Activated CD8-positive, alpha-beta T cell treated with anti-CD3 and anti-CD28 coated beads for 36 hours (primary cell): ENCODE measurements at regions of chr4 and their contacts with region 1.

Region 1: DNA sequence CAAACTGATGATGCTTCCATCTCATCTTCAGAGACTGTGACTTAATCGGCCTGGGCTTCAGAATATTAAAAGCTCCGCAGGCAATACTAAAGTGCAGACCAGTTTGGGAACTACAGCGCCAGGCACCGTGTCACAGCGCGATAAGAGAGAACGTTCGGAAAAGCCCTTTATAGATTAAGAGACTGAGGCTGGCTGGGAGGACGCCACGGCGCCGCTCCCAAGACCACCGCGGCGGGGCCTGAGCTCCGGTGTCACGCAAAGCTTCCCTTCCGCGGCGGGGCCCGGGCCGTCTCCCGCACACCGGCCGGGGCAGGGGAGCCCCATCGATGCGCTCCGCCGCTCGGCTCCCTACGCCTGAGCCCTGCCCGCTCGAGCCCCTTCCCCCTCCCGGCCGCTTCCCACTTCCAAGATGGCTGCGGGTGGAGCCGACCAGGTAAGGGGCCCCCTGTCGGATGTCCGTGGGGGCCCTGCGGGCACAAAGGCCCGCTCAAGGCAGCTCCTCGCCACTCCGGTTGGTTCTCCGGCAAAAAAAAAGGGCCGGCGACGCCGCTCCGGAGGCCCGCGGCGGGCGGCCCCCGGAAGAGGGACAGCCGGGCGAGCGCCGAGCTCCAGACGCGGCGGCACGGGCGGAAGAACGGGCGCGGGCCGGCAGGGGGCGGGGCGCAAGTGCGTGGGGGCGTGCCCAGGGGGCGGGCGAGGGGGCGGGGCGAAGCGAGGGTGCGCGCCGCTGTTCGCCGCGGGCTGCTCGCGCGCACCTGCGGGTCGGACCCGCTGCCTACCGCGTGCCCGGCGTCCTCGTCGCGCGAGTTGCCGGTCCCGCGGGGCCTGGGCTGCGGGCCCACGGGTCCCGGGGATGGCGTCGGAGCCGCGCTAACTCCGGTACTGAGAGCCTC is at the start of gene TBC1D14:
- DNase-seq: peak; percentile 88
- ATAC-seq: peak; percentile 89
- H3K4me3 Mint-ChIP-seq: peak within 1 kb of the TSS; percentile 93
- H3K27ac Mint-ChIP-seq: peak within 1 kb of the TSS; percentile 90
- H3K4me1 Mint-ChIP-seq: peaks cover 42% of the 10 kb centered on the region
- H3K27me3 Mint-ChIP-seq: no peaks in the 10 kb centered on the region
- CTCF ChIP-seq: no peak
- total RNA-seq, gene TBC1D14: 34.7 to 36.3 TPM

Region 2: DNA sequence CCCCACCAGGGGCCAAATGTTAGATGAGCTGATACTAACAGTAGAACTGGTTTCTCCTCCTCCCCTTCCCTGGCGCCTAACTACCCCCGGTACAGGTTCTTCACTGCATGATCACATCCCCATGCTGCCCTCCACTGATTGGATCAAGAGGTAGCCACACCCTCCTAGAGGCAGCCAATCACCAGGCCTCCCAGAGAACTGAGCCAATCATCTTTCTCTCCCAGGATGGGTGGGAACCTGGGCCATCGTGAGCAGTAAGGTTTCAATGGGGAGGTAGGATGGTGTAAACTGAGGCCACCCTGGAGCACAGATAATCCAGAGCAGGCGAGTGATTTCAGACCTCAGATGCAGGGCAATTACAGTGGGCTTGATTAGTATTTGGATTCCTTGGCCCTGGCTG is 501.1 kb before region 1 on chr4:
- CTCF ChIA-PET with region 1: no interaction called
- POLR2A ChIA-PET with region 1: no interaction called
- intact Hi-C with region 1: no loop called
- DNase-seq: no peak
- ATAC-seq: no peak
- H3K4me3 Mint-ChIP-seq: no peak overlapping the region
- H3K27ac Mint-ChIP-seq: no peak overlapping the region
- H3K4me1 Mint-ChIP-seq: no peaks in the 10 kb centered on the region
- H3K27me3 Mint-ChIP-seq: peaks cover 26% of the 10 kb centered on the region
- CTCF ChIP-seq: no peak

Region 3: GRCh38 chr4:6783053-6783981 is 126.0 kb before region 1 on chr4:
- CTCF ChIA-PET with region 1: no interaction called
- POLR2A ChIA-PET with region 1: interaction called, 13 read pairs
- intact Hi-C with region 1: no loop called
- DNase-seq: peak; percentile 89
- ATAC-seq: peak; percentile 75
- H3K4me3 Mint-ChIP-seq: peak overlapping the region; percentile 84
- H3K27ac Mint-ChIP-seq: peak overlapping the region; percentile 76
- H3K4me1 Mint-ChIP-seq: peaks cover 68% of the 10 kb centered on the region
- H3K27me3 Mint-ChIP-seq: no peaks in the 10 kb centered on the region
- CTCF ChIP-seq: no peak

Region 4: GRCh38 chr4:6926681-6927478 is 17.6 kb after region 1 on chr4:
- CTCF ChIA-PET with region 1: interaction called, 14 read pairs
- POLR2A ChIA-PET with region 1: interaction called, 13 read pairs
- intact Hi-C with region 1: no loop called
- DNase-seq: peak; percentile 63
- ATAC-seq: peak; percentile 68
- H3K4me3 Mint-ChIP-seq: peak overlapping the region; percentile 40
- H3K27ac Mint-ChIP-seq: peak overlapping the region; percentile 77
- H3K4me1 Mint-ChIP-seq: peaks cover 71% of the 10 kb centered on the region
- H3K27me3 Mint-ChIP-seq: no peaks in the 10 kb centered on the region
- CTCF ChIP-seq: no peak

Region 5: DNA sequence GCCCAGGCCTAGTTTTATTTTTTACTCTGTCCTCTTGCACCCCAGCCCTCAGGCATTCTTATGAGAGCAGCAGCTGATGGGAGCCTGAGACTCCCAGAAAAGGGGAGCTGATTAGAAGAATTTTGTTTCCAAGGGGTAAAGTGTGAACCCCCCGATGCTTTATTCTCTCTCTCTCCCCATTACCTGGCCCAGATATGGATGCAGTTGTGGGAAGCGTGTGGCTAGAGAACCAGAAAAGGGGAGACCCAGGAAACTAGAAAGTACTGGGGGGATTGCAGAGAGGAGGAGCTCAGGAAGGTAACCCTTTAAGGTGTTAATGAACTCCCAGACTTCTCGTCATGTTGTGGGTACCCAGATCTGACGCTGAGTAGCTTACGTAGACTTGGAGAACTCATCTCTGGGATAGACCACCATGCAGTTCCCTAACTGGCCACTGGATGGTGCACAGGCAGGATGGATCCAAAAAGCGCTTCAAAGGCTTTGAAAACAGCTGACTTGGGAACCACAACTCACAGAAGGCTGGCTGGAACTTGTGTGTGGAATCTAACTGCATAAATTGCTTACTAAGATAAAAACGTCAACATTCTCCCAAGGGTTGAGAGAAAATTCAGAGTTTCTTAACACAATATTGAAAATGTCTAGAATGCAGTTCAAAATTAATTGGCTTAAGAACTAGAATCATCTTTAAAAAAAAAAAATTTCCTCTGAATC is 65.0 kb after region 1 on chr4:
- CTCF ChIA-PET with region 1: interaction called, 15 read pairs
- POLR2A ChIA-PET with region 1: interaction called, 3 read pairs
- intact Hi-C with region 1: no loop called
- DNase-seq: peak; percentile 90
- ATAC-seq: peak; percentile 99
- H3K4me3 Mint-ChIP-seq: no peak overlapping the region
- H3K27ac Mint-ChIP-seq: no peak overlapping the region
- H3K4me1 Mint-ChIP-seq: peaks cover 9% of the 10 kb centered on the region
- H3K27me3 Mint-ChIP-seq: no peaks in the 10 kb centered on the region
- CTCF ChIP-seq: peak; percentile 94